ENCODE measurements at regions of chr1 and their contacts with region 1.

Region 1: GRCh38 chr1:103106426-103107341 is 1.6 kb downstream of the COL11A1 start:
- DNase-seq: peak; percentile 34 to 58 (median 51)
- H3K4me3 ChIP-seq: peak overlapping the region in 5 of 7 experiments; percentile 35 to 79 (median 54)
- H3K27ac ChIP-seq: no peak overlapping the region
- H3K4me1 ChIP-seq: peaks cover 0 to 19% (median 7%) of the 10 kb centered on the region in 4 experiments
- H3K27me3 ChIP-seq: peaks cover 4 to 36% (median 13%) of the 10 kb centered on the region in 5 experiments

Region 2: DNA sequence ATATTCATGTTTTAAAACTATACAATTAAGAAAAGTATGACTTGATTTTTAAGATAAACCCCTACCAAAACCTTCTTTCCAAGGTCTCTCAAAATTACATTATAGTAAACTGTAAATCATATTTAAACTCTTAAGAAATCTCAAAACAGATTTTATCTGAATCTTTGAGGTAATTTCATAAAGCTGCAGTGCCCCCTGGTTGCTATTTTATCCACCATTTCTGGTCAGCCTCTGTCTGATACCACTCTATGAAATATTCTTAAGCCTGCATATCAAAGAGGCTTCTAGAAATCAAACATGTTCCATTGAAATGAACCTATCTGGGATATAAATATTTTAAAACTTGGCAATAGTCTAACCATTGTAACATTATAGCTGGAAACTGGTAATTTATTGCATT is 315.7 kb before region 1 on chr1:
- CTCF ChIA-PET with region 1: no interaction called
- POLR2A ChIA-PET with region 1: no interaction called
- DNase-seq: no peak
- H3K4me3 ChIP-seq: no peak overlapping the region
- H3K27ac ChIP-seq: no peak overlapping the region
- H3K4me1 ChIP-seq: no peaks in the 10 kb centered on the region
- H3K27me3 ChIP-seq: no peaks in the 10 kb centered on the region

Region 3: GRCh38 chr1:103129255-103129654 is 22.6 kb after region 1 on chr1:
- CTCF ChIA-PET with region 1: no interaction called
- POLR2A ChIA-PET with region 1: no interaction called
- DNase-seq: no peak
- H3K4me3 ChIP-seq: no peak overlapping the region
- H3K27ac ChIP-seq: no peak overlapping the region
- H3K4me1 ChIP-seq: no peaks in the 10 kb centered on the region
- H3K27me3 ChIP-seq: no peaks in the 10 kb centered on the region

Region 4: DNA sequence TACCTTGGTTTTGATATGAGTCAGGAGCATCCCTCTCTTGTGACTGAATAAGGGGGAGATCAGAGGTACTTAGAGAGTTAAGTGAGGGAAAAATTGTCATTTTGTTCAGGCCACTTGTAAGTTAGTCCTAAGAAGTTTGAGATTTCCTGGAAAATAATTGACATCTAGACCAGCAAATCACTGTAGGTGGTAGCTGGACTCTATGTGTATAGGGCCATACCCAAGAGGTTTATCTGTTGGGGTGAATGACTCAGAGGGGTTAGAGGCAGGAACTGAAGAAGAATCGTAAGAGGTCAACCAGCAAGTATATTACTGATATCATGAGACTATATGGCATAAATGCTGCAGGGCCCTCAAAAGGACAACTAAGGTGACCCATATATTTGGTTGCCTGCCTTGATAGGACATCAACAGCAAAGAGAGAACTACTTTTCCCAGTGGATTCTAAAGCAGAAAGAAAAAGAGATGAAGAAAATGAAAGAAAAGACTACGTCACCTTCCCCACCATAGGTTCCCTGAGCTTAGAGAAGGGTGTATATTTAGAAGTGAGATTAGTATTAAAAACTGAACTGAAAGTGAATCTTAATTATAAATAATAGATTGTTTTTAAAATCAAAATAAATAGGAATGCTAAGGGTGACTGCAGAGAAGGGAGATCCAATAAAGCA is 410.8 kb after region 1 on chr1:
- CTCF ChIA-PET with region 1: interaction called, 12 read pairs
- POLR2A ChIA-PET with region 1: no interaction called
- DNase-seq: no peak
- H3K4me3 ChIP-seq: no peak overlapping the region
- H3K27ac ChIP-seq: no peak overlapping the region
- H3K4me1 ChIP-seq: peaks cover 0 to 1% (median 0%) of the 10 kb centered on the region in 4 experiments
- H3K27me3 ChIP-seq: no peaks in the 10 kb centered on the region

Measured in common myeloid progenitor, CD34-positive (primary cell).